HEK293 (cell line): ENCODE measurements at regions of chr7 and their contacts with region 1.

Region 1: GRCh38 chr7:100691676-100692577 is 2.1 kb downstream of the GIGYF1 start:
- H3K4me3 ChIP-seq: peak overlapping the region; percentile 6; the same call in 1 of the 2 replicates
- H3K27ac ChIP-seq: peak overlapping the region; percentile 25; the same call in 1 of the 2 replicates
- H3K4me1 ChIP-seq: peaks cover 2% of the 10 kb centered on the region; the same call in 1 of the 2 replicates
- CTCF ChIP-seq: peak; percentile 93

Region 2: DNA sequence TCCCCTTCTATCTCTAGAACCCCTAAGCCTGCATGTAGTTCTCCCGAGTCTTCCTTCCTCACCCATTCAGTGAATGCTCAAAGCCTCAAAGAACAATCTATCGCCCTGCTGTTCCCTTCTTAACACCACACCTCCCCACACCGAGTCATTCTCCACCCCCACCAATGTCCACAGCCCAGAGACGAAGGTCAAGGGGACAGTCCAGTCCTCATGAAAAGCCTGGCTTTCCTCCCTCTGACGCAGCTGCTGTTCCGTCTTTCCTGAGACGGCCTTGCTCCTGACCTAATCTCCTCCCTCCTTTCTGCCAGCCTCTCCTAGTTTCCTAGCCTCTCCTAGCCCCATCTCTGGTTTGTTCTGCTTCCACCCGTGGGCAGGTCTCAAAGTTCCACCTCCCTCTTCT is 70.4 kb before region 1 on chr7:
- CTCF ChIA-PET with region 1: interaction called, 10 read pairs
- POLR2A ChIA-PET with region 1: no interaction called
- H3K4me3 ChIP-seq: no peak overlapping the region
- H3K27ac ChIP-seq: no peak overlapping the region
- H3K4me1 ChIP-seq: no peaks in the 10 kb centered on the region
- CTCF ChIP-seq: no peak

Region 3: GRCh38 chr7:100673300-100673941 is 18.5 kb before region 1 on chr7 and contains the start of gene GNB2:
- CTCF ChIA-PET with region 1: interaction called, 77 read pairs
- POLR2A ChIA-PET with region 1: interaction called, 5 read pairs
- H3K4me3 ChIP-seq: peak within 1 kb of the TSS; percentile 97
- H3K27ac ChIP-seq: peak within 1 kb of the TSS; percentile 84
- H3K4me1 ChIP-seq: no peaks in the 10 kb centered on the region
- CTCF ChIP-seq: no peak

Region 4: DNA sequence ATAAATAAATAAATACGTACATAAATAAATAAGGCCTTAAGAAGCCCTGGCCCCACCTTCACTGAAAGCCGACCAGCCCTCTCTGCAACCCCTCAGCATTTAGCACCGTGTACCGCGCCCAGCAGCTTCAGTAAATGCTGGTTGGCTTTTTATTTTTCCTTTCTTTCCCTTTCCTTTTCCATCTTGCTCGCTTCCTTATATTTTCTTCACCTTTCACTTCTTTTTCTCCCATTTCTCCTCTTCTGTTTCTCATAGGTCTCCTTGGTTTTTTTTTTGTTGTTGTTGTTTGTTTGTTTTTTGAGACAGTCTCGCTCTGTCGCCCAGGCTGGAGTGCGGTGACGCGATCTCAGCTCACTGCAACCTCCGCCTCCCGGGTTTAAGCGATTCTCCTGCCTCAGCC is 52.7 kb after region 1 on chr7:
- CTCF ChIA-PET with region 1: no interaction called
- POLR2A ChIA-PET with region 1: no interaction called
- H3K4me3 ChIP-seq: no peak overlapping the region
- H3K27ac ChIP-seq: no peak overlapping the region
- H3K4me1 ChIP-seq: no peaks in the 10 kb centered on the region
- CTCF ChIP-seq: no peak